Right ventricle myocardium inferior (tissue), 1 donor: ENCODE measurements at regions of chr1 and their contacts with region 1.

Region 1: DNA sequence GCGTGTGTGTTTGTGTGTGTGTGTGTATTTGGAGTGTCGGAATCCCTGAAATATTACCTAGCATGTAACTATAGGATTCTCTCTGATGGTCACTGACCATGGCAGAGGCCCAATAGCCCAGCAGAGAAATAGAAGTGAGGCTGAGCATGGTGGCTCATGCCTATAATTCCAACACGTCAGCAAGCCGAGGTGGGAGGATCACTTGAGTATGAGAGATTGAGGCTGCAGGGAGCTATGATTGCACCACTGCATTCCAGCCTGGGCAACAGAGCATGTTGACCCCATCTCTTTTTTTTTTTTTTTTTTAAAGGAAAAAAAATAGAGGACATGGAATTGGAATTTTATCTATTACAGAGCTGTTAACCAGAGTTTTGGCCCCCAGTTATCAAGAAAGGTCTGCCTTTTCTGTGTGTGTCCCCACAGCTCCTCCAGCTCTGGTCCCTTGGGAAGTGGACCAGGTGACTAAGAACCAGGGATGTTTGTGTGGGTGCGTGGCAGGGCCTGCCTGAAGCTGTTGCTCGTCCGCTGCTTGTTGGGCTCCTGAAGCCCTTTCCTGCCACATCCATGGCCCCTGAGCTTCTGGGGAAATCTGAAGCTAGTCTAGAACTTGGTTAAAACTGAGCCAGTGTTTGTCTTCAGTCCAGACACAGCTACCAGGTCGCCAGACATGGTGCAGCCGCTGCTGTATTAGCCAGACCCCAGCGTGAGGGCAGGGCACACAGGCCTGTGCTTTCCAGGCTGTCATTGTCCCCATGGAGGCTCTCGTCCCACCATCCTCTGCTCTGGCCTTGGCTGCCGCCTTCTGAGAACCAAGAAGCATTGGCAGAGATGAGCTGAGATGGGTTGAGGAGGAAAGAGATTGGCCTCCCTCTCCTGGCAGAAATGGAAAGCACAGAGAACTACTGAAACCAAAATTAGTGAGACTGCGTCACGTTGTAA is 25.5 kb downstream of the CAPN9 start:
- DNase-seq: peak; percentile 78
- ATAC-seq: peak; percentile 90

Region 2: GRCh38 chr1:230495891-230496385 is 276.8 kb before region 1 on chr1:
- intact Hi-C with region 1: no loop called
- DNase-seq: no peak
- ATAC-seq: no peak

Region 3: DNA sequence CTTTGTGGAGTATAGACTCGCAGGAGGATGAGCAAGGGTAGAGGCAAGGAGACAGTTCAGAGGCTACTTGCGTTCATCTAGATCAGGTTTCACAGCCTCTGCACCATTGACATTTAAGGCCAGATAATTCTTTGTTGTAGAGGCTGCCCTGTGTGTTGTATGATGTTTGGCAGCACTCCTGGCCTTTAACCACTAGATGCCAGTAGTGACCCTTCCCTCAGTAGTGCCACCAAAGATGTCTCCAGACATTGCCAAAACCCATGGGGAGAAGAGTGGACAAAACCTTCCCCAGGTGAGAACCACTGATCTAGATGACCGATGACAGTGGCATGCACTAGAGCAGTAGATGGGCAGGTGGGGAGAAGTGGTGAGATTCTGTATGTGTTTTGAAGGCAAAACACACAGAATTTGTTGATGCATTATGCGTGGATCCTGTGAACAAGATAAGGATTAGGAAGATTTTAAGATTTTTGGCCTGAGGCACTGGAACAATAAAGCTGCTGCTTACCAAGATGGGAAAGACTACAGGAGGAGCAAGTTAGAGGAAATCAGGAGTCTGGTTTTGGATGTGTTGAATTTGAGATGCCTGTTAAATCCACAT is 140.4 kb before region 1 on chr1:
- intact Hi-C with region 1: loop called (anchors 2 kb)
- DNase-seq: no peak
- ATAC-seq: peak; percentile 44

Region 4: GRCh38 chr1:230642263-230642959 is 130.3 kb before region 1 on chr1 and contains the start of gene COG2:
- intact Hi-C with region 1: loop called (anchors 2 kb)
- DNase-seq: peak; percentile 98
- ATAC-seq: peak; percentile 99
- total RNA-seq, gene COG2: 28.1 TPM

Region 5: DNA sequence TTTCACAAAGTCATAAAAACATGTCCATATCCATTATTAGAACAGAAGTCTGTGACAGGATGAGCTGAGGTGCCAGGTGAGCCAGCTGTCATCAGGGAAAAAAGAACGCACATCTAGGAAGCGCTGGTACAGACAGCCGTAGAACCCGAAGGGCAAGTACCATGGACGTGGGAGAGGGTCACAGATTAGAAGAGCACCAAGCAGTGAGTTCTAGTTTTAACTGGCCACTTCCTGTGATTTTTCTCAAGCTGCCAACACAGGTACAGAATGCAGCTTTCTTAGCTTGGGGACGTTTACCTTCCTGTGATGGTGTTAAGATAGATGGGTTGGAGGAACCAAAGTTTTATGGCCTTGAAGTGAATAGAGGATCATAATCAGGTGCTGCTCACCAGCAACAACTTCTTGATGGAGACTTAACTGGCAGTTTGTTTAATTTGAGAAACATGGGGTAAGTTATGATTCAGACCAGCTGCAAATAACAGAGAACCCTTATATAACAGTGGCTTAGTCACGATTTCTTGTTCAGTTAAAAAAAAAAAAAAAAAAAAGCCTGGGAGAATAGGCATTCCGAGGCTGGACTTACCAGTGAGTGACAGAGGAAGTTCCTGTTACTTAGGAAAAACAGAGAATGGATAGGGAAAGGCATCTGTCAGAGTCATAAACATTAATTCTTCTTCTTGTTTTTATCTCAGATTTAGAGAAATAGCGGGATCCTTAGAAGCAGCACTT is 89.7 kb before region 1 on chr1:
- intact Hi-C with region 1: loop called (anchors 1 kb)
- DNase-seq: no peak
- ATAC-seq: no peak

Region 6: DNA sequence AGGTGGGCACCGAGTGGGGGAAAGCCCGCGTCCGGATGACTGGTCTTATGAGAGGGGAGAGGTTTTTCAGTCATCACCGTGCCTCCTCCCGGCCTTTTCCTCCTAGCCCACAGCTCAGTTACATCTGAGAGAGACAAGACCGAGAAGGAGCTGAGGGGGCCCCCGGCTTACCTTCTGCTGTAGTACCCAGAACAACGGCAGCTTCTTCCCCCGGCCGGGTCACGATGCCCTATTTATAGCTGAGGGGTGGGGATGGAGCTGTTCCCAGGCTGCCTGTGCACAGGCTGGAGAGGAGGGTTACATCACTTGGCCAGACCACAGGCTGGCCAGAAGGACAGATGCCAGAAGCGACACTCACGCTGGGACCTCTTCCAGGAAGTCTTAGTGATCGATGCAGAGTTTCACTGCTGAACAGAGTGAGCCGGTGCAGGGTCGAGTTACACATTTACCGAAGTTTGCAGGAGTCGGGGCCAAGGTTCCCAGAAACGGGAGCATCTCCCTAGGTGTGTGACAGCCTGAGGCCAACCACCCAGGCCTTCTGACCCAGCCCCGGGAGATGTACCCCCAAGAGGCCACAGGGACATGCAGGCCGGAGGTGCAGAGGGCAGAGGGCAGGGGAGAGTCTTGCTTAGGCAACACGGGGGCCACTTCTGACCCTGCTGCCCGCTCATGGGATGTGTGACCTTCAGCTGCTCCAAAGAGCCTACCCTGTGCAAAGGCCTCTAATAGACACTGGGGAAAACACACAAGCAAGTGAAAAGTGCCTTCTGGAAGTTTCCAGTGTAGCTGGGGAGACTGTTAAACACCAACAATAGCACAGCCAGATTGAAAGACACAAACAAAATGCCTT is 58.6 kb before region 1 on chr1 and contains the start of gene AGT:
- intact Hi-C with region 1: loop called (anchors 5 kb)
- DNase-seq: peak; percentile 84
- ATAC-seq: peak; percentile 96
- total RNA-seq, gene AGT: 74.5 TPM

Region 7: DNA sequence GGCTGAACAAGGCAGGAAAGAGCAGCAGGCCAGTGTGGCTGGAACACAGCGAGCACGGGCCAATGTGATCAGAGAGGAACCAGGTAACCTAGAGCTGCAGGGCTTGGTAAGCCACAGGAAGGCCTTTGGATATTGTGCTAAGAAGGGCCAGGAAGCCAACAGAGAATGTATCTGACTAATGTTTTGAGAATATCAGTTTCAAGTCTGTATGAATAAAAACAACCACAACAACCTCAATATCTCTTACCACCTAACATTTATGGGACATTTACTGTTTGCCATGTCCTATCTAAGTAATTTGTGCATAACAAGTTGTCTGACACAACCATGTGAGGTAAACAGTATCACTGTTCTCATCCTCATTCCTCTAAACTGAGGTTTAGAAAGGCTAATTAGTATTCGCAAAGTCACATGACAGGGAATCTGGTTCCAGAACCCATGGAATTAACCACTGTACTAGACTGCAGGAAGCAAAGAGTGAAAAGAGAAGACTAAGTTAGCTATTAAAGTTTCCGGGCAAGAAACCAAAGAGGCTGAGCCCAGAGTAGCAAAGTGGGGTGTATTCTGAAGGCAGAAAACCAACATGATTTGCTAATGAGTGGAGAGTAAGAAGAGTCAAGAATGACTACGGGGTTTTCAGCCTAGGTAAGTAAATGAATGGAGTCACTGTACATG is 604.3 kb after region 1 on chr1:
- intact Hi-C with region 1: no loop called
- DNase-seq: peak; percentile 48
- ATAC-seq: no peak